Ascending aorta (tissue), 2 donors: ENCODE measurements at regions of chr6 and their contacts with region 1.

Region 1: DNA sequence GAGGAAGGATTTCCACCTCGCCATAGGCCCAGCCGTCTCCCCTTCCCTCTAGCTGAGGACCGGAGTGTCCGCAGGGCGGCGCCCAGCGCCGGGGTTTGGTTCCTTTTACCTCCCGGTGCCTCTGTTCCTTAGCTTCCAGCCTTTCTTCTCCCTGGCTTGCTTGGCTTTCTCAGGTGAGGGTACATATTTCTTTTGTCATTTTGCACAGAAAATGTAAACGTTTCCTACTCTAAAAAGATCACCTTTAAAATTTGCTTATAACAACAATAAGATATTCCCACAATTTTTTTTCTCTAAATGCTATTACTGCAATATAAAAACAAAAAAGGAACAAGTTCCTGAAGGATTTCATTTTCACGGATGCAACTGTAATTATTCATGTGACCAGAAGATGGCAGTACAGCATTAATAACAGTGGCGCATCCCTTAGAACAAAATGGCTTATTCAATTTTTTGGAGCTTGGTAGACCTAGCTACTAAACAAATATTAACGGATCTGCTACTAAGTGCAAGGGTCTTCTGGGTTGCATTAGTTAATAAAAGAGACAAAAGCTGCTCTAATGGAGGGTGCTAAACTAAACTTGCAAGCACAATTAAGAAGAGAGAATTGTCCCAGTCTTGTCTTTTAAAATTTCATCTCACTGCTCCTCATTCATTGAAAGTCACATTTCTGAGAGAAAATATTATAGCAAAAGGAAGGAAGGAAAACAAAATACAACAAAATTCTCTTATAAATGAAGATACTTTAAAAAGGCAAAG is 172.9 kb downstream of the ADGRG6 start:
- DNase-seq: no peak
- H3K4me3 ChIP-seq: no peak overlapping the region
- H3K27ac ChIP-seq: no peak overlapping the region
- H3K4me1 ChIP-seq: no peaks in the 10 kb centered on the region
- H3K27me3 ChIP-seq: no peaks in the 10 kb centered on the region
- CTCF ChIP-seq: peak; percentile 60 to 84 (median 79)

Region 2: DNA sequence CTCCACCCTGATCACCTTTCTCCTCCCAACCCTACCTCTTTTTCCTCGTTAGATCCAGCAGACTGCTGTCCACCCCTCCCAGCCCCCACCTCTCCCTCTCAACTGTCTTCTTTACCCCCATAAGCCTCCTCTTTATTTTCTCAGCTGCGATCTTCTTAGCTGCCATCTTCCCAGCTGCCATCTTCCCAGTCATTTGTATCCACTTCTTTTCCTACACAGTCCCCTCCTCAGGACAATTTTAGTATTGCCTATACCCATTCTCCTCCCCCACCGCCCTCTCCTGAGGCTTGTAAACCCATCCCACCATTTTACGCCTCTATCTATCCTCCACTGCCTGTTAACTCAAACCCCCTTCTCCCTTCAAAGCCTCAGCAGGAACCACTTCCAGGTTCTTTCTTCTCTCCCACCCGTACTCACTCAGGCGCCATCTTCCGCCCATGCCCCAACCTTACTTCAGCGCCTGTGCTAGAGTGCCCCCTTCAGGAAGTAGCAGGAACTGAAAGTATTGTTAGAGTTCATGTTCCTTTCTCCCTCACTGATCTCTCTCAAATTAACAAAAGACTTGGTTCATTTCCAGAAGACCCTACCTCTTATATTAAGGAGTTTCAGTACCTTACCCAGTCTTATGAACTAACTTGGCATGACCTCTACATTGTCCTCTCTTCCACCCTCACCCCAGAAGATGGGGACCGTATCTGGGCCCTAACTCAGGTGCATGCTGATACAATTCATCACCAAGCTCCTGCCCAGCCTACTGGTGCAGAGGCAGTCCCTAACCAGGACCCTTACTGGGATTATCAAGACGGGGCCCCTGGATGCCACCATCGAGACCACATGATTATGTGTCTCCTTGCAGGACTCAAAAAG is 63.1 kb after region 1 on chr6:
- intact Hi-C with region 1: loop called (anchors 5 kb)
- DNase-seq: no peak
- H3K4me3 ChIP-seq: no peak overlapping the region
- H3K27ac ChIP-seq: no peak overlapping the region
- H3K4me1 ChIP-seq: no peaks in the 10 kb centered on the region
- H3K27me3 ChIP-seq: no peaks in the 10 kb centered on the region
- CTCF ChIP-seq: peak in 2 of 3 experiments; percentile 22 to 30

Region 3: DNA sequence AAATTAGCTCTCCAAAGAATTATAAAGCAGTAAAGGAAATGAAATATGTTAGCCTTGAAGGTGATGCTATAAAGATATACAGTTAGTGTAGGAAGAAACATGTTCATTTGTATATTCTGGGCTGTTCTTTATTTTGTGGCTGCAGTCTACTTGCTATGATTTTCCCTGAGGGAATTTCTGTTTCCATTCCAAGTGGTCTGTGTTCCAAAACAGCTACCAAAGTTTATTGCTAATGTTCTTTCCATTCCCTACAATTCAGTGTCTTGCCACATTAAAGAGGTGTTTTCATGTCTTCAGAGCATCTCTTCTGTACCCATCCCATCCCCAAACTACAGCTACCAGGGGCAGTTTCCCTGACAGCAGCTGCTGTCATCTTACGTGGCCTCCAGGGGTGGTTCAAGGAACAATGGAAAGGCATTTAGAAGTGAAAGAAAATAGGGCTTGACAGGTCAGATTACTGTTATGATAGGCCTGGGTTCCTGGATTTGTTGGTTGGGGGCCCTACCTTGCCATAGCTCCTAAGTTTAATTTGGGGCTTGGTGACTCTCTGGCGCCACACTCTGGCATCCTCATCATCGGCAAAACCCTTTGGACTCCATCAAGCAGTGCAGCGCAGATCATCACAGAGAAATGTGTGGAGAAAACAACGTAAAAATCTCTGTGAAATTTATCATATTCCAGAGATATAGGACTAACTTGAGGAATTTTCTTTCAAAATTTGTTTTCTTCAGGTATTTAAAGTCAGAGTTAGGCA is 552.2 kb after region 1 on chr6:
- intact Hi-C with region 1: loop called (anchors 5 kb)
- DNase-seq: no peak
- H3K4me3 ChIP-seq: no peak overlapping the region
- H3K27ac ChIP-seq: no peak overlapping the region
- H3K4me1 ChIP-seq: no peaks in the 10 kb centered on the region
- H3K27me3 ChIP-seq: no peaks in the 10 kb centered on the region
- CTCF ChIP-seq: peak; percentile 29 to 61 (median 53)